Activated naive CD4-positive, alpha-beta T cell treated with anti-CD3 and anti-CD28 coated beads, Interleukin-2, amount 10 ng/mL, durations not matched to agents 7 days and 5 days (primary cell): ENCODE measurements at regions of chr19 and their contacts with region 1.

Region 1: DNA sequence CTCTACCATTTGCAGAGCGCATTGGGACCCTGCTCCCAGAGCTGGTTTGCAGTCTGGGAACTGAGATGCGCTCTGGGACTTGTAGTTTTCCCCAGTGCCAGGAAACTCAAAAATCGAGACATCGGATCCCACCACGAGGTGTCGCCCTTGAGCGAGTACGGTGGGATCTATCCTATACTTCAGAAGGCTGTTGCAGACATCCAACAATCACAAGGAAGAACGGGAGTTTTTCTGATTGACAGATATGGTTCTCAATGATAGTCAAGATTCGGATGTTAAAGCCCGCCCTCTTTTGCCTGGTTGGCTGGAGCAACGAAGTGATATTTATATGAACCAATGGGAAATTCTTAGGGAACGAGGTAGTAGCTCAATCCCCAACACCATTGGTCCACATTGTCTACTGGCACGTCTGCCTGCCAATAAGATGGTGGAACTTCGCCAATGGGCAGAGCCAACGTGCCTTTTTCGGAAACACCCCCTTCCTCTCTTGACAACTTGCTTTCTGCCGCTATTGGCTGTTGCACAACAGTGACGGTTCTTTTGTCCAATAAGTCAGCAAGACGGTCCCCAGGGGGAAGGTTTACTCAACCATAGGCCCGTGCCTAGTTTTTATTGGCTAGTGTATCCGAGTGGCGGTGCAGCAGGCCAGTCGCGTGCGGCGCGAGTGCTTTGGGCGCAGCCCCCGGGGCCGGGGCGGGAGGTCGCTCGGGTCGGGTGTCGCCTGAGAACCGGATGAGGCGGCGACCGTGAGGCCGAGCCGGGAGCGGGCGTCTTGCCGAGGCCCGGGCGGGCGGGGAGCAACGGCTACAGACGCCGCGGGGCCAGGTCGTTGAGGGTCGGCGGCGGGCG is at the start of gene DNM2:
- DNase-seq: peak; percentile 98
- H3K4me3 Mint-ChIP-seq: peak within 1 kb of the TSS; percentile 98
- H3K27ac Mint-ChIP-seq: peak within 1 kb of the TSS; percentile 93
- H3K4me1 Mint-ChIP-seq: peaks cover 43% of the 10 kb centered on the region
- H3K27me3 Mint-ChIP-seq: no peaks in the 10 kb centered on the region

Region 2: GRCh38 chr19:10686661-10687517 is 30.7 kb before region 1 on chr19:
- CTCF ChIA-PET with region 1: no interaction called
- DNase-seq: no peak
- H3K4me3 Mint-ChIP-seq: no peak overlapping the region
- H3K27ac Mint-ChIP-seq: no peak overlapping the region
- H3K4me1 Mint-ChIP-seq: no peaks in the 10 kb centered on the region
- H3K27me3 Mint-ChIP-seq: peaks cover 3% of the 10 kb centered on the region

Region 3: DNA sequence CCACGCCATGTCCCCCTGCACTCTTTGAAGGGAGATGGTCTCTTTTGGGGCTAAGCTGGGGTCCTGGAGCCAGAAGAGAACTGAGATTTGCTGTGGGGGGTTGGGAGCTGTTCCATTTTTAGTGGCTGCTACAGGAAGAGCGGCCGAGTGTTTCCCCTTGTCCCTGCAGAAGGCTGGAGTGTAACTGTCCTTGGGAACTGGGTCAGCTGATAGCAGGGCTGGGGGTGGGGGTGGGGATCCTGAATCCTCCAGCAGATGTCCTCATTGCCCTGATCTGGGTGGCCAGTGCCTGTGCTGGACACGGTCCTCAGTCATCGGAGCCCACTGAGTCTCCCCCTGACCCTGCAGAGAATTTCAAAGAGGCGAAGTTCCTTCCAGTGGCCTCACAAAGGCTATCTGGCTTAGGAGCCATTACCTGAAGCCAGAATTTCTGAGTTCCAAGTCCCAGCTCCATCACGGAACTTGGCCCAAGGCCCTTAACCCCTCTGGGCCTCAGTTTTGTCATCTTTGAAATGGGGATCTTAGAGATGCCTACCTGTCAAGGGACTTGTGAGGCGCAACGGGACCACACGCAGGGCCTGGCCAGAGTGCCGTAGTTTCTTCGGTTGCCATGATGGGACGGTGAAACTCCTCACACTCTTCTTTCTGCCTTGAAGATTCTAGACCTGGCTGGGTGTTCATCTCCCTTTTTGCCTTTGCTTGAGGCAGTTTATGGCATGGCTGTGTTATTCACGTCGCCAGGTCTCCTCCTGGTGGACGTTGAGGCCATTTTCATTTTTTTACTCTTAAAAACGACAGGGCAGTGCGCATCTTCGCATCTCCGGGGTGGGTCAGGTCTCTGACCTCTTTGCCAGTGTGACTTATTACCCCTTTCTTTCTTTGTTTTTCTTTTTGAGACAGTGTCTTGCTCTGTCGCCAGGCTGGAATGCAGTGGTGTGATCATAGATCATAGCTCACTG is 52.2 kb after region 1 on chr19:
- CTCF ChIA-PET with region 1: interaction called, 17 read pairs
- DNase-seq: peak; percentile 53
- H3K4me3 Mint-ChIP-seq: no peak overlapping the region
- H3K27ac Mint-ChIP-seq: peak overlapping the region; percentile 76
- H3K4me1 Mint-ChIP-seq: peaks cover 45% of the 10 kb centered on the region
- H3K27me3 Mint-ChIP-seq: no peaks in the 10 kb centered on the region

Region 4: GRCh38 chr19:10835754-10836477 is 118.3 kb after region 1 on chr19 and contains the start of gene TMED1:
- CTCF ChIA-PET with region 1: interaction called, 12 read pairs
- DNase-seq: peak; percentile 99
- H3K4me3 Mint-ChIP-seq: peak within 1 kb of the TSS; percentile 91
- H3K27ac Mint-ChIP-seq: peak within 1 kb of the TSS; percentile 98
- H3K4me1 Mint-ChIP-seq: peaks cover 15% of the 10 kb centered on the region
- H3K27me3 Mint-ChIP-seq: peaks cover 4% of the 10 kb centered on the region

Region 5: GRCh38 chr19:10864538-10864899 is 146.9 kb after region 1 on chr19:
- CTCF ChIA-PET with region 1: interaction called, 142 read pairs
- DNase-seq: peak; percentile 89
- H3K4me3 Mint-ChIP-seq: no peak overlapping the region
- H3K27ac Mint-ChIP-seq: no peak overlapping the region
- H3K4me1 Mint-ChIP-seq: peaks cover 33% of the 10 kb centered on the region
- H3K27me3 Mint-ChIP-seq: no peaks in the 10 kb centered on the region